Posterior vena cava (tissue), 2 donors: ENCODE measurements at regions of chr1 and their contacts with region 1.

Region 1: GRCh38 chr1:27504588-27505419 is 14.8 kb upstream of the WASF2 start:
- DNase-seq: peak; percentile 93

Region 2: DNA sequence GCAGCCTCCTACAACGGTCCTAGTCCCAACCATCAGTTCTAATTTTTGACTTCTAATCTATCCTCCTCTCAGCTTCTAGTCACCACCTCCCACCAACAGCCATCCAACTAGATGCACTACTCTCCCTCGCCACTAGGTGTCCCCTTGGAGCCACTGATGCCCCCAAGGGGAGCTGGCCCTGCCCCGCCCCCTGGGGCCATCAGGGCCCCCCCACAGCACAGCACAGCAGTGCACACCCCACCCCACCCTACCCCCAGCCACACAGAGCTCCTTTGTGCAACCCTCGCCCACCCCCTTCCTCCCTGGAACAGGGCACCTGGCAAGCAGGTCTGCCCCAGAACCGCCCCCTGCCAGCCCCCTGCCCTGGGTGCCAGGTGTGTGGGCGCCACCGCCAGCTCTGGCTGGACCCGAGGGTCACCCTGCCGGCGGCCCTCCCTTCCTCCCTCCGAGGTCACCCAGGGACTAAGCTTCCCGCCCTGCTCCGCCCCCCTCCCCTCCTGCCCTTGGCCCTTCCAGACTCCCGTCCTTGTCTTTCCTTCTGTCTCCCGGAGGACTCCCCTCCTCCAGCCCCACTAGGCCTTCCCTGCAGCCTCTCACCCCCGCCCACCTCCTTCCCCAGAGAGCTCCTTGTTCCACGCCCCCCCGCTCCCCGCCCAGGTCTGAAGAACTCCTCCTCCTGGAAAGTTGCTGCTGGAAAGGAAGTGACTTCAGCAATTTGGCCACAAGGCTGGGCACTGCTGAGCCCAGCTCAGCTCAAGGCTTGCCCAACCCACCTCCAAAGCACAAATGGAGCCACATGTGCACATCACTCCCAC is 52.2 kb after region 1 on chr1:
- intact Hi-C with region 1: loop called in 1 of 2 experiments (anchors 5 kb)
- DNase-seq: peak; percentile 98